Colonic mucosa (tissue), 4 donors: ENCODE measurements at regions of chr22 and their contacts with region 1.

Region 1: GRCh38 chr22:25362215-25362882 is 142.9 kb downstream of the CRYBB2 start:
- DNase-seq: peak; percentile 75
- H3K4me3 ChIP-seq: no peak overlapping the region
- H3K27ac ChIP-seq: no peak overlapping the region
- H3K4me1 ChIP-seq: peaks cover 8% of the 10 kb centered on the region
- H3K27me3 ChIP-seq: no peaks in the 10 kb centered on the region
- CTCF ChIP-seq: peak; percentile 92

Region 2: GRCh38 chr22:25404928-25405816 is 42.8 kb after region 1 on chr22:
- intact Hi-C with region 1: no loop called
- DNase-seq: peak; percentile 83
- H3K4me3 ChIP-seq: peak overlapping the region; percentile 57
- H3K27ac ChIP-seq: peak overlapping the region; percentile 64
- H3K4me1 ChIP-seq: no peaks in the 10 kb centered on the region
- H3K27me3 ChIP-seq: no peaks in the 10 kb centered on the region
- CTCF ChIP-seq: no peak

Region 3: GRCh38 chr22:25447686-25448434 is 85.5 kb after region 1 on chr22:
- intact Hi-C with region 1: loop called (anchors 5 kb)
- DNase-seq: peak; percentile 92
- H3K4me3 ChIP-seq: peak overlapping the region; percentile 76
- H3K27ac ChIP-seq: peak overlapping the region; percentile 32
- H3K4me1 ChIP-seq: peaks cover 3% of the 10 kb centered on the region
- H3K27me3 ChIP-seq: no peaks in the 10 kb centered on the region
- CTCF ChIP-seq: peak; percentile 90